WTC11 (cell line): ENCODE measurements at regions of chr6 and their contacts with region 1.

Region 1: DNA sequence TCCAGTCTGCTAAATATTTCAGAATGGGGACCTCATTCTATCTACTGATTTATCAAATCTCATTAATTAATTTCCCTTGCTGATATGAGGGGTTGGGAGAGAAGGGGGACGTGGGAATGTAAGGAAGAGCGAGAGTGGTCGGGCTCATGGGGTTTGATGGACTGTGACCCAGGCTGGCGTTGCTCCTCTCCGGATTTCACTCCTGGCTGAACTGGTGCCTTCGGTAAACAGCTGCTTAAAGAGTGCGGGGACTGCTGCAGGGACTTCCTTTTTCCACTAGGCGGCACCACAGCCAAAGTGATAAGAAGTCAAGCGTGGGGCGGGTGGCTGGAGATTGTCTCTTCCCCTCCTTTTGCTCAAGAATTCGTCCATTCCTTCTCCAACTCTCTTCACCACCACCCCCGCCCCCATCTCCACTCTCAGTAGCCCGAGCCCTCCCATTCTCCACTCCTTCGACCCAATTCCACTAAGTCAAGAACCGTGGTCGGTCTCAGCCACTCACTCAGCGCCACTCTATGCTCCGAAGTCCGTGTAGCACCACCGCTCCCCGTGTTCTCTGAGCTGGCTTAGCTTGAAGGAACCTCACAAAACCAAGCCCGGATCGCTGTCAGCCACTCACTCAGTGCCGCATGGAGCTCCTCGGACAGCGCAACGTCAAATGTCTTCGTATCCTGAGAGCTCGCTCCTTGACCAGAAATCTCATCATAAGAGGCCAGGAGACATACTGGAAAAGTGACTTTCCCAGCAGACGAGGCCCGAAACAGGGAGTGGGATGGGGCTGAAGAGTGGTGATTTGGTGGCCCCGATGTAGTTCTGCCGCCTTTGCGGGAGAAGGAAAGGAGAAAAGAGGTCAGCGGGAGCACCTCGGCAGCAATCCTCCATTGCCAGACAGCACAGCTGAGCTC is 9.7 kb downstream of the TRIM31 start:
- DNase-seq: peak; percentile 90
- ATAC-seq: peak; percentile 51
- H3K4me3 Mint-ChIP-seq: peak overlapping the region; percentile 80
- H3K27ac Mint-ChIP-seq: no peak overlapping the region
- H3K4me1 Mint-ChIP-seq: peaks cover 30% of the 10 kb centered on the region
- H3K27me3 Mint-ChIP-seq: peaks cover 83% of the 10 kb centered on the region
- CTCF ChIP-seq: peak; percentile 85

Region 2: GRCh38 chr6:29847871-29848630 is 255.2 kb before region 1 on chr6:
- CTCF ChIA-PET with region 1: interaction called, 10 read pairs
- POLR2A ChIA-PET with region 1: no interaction called
- DNase-seq: peak; percentile 91
- ATAC-seq: peak; percentile 85
- H3K4me3 Mint-ChIP-seq: no peak overlapping the region
- H3K27ac Mint-ChIP-seq: no peak overlapping the region
- H3K4me1 Mint-ChIP-seq: peaks cover 30% of the 10 kb centered on the region
- H3K27me3 Mint-ChIP-seq: peaks cover 56% of the 10 kb centered on the region
- CTCF ChIP-seq: peak; percentile 95

Region 3: DNA sequence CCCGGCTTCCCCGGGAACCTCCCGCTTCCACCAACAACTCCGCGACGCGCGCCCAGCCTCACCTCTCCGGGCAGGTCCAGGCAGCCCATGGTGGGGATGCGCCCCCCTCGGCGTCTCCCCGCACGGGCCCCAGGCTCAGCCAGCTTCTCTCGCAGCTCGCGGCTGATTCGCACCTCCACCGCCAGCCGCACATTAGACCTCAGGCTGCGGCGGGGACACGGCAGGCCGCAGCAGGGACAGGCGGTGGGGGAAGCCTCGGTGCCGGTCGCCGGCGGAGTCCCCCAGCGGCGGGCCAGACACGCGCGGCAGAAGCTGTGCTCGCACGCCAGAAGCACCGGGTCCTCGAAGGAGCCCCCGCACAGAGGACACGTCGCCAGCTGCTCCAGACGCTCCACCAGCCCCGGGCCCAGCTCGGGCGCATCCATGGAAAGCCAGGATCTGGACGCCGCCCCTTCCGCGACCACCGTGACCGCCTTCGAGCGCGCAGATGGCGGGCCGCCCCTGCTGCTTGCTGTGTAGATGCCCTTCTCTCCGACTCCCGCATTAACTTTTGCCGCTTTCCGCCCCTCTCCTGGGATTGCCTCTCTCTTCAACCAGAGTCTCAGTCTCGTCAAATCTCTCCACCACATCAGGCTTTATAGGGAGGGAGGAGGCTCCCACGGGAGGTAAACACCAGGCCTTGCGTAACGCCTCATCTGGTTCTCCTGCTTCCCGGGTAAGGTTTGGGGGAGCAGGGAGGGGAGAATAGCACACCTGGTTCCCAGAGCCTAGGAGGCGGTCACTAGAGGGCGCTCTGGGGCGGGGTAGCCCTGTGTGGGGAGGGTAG is 27.8 kb before region 1 on chr6 and contains the start of gene RNF39:
- CTCF ChIA-PET with region 1: interaction called, 69 read pairs
- POLR2A ChIA-PET with region 1: interaction called, 7 read pairs
- DNase-seq: peak; percentile 83
- ATAC-seq: peak; percentile 68
- H3K4me3 Mint-ChIP-seq: peak within 1 kb of the TSS; percentile 96
- H3K27ac Mint-ChIP-seq: peak within 1 kb of the TSS; percentile 47
- H3K4me1 Mint-ChIP-seq: peaks cover 32% of the 10 kb centered on the region
- H3K27me3 Mint-ChIP-seq: peaks cover 94% of the 10 kb centered on the region
- CTCF ChIP-seq: peak; percentile 73
- total RNA-seq, gene RNF39: 4.2 to 5.1 TPM (median 4.5 TPM) in 3 replicates

Region 4: DNA sequence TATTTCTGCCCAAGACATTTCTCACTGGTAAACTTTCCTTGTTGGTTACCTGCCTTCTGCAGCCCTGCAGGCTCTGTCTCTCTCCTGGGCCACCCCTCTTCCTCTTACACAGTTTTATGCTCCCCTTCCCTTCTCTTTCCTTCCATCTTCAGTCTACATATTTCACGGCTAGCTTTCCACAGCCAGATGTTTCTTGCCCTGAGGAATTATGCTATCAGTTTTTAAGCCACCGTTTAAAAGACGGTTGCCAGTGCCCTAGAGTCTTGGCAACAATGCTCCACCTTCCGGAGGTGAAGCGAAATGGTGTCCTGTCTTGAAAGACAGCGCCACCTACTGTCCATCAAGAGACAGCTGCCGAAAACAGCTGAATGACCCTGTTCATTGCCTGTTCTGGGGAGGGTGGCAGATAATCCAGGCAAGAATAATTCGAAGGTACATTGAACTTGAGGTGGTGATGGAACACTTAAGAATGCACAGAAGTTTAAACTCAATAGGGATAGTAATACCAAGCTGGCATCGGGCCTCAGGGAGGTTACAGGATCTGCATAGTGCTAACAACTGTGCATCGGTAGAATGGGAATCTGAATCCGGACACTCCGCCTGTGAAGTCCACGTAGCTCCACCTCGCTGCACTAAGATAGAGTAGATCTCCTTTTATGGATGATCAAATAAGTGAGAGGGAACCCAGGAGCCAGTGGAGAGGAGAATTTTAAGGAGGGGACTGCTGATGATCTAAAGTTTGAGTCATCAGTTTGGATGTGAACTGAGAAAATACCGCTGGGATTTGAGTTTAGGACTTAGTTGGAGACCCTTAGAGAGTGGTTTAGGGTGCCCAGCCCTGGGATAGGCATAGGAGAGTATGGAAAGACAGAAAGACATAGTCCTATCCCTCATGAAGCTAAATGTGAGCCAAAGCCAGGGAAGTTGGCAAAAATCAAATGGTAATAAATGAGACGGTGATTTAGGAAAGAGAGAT is 28.0 kb after region 1 on chr6:
- CTCF ChIA-PET with region 1: interaction called, 389 read pairs
- POLR2A ChIA-PET with region 1: interaction called, 3 read pairs
- DNase-seq: peak; percentile 58
- ATAC-seq: peak; percentile 62
- H3K4me3 Mint-ChIP-seq: peak overlapping the region; percentile 37; the same call in 1 of the 2 replicates
- H3K27ac Mint-ChIP-seq: no peak overlapping the region
- H3K4me1 Mint-ChIP-seq: peaks cover 17% of the 10 kb centered on the region
- H3K27me3 Mint-ChIP-seq: peaks cover 69% of the 10 kb centered on the region
- CTCF ChIP-seq: peak; percentile 94

Region 5: GRCh38 chr6:30169658-30170614 is 66.7 kb after region 1 on chr6:
- CTCF ChIA-PET with region 1: interaction called, 25 read pairs
- POLR2A ChIA-PET with region 1: no interaction called
- DNase-seq: no peak
- ATAC-seq: peak; percentile 79
- H3K4me3 Mint-ChIP-seq: no peak overlapping the region
- H3K27ac Mint-ChIP-seq: no peak overlapping the region
- H3K4me1 Mint-ChIP-seq: peaks cover 12% of the 10 kb centered on the region
- H3K27me3 Mint-ChIP-seq: peaks cover 78% of the 10 kb centered on the region
- CTCF ChIP-seq: peak; percentile 74

Region 6: GRCh38 chr6:30219244-30219643 is 116.0 kb after region 1 on chr6:
- CTCF ChIA-PET with region 1: interaction called, 22 read pairs
- POLR2A ChIA-PET with region 1: no interaction called
- DNase-seq: peak; percentile 44
- ATAC-seq: peak; percentile 81
- H3K4me3 Mint-ChIP-seq: no peak overlapping the region
- H3K27ac Mint-ChIP-seq: no peak overlapping the region
- H3K4me1 Mint-ChIP-seq: peaks cover 15% of the 10 kb centered on the region
- H3K27me3 Mint-ChIP-seq: peaks cover 32% of the 10 kb centered on the region
- CTCF ChIP-seq: peak; percentile 28; the same call in 1 of the 2 replicates

Region 7: DNA sequence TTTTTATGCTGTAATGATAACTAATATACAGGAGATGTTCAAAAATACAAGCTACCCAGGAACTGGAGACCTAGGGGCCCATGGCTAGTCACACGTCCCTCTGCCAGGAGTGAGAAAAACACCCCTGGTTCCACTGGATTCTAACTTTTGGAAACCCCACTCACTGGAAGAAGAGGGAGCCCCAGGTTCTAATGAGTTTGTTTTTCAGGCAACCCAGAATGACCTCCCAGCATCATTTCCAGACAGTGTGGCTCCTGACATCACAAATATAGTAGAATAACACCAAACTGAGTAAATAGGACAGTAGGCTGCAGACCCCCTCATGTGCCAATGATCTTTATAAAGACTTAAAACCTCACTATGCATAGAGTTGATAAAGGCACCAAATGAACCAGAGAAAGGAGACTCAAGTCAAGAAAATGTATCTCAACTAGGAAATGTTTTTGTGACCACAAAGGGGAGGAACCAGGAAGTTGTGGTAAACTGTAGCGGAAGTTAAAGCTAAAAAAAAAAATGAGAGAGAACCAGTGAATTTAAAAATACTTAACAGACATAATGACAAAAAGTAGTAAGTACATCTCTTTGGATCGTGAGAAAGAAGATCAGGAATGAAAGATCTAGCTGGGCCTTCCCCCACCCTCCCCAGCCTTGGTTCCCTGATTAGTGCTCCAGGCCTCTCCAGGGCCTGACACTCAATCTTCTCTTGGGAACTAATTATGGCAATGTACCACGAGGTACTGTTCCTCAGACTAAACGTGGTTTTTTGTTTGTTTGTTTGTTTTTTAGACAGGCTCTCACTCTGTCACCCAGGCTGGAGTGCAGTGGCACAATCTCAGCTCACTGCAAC is 405.9 kb after region 1 on chr6:
- CTCF ChIA-PET with region 1: no interaction called
- POLR2A ChIA-PET with region 1: no interaction called
- DNase-seq: no peak
- ATAC-seq: no peak
- H3K4me3 Mint-ChIP-seq: no peak overlapping the region
- H3K27ac Mint-ChIP-seq: no peak overlapping the region
- H3K4me1 Mint-ChIP-seq: peaks cover 19% of the 10 kb centered on the region
- H3K27me3 Mint-ChIP-seq: no peaks in the 10 kb centered on the region
- CTCF ChIP-seq: no peak

Region 8: DNA sequence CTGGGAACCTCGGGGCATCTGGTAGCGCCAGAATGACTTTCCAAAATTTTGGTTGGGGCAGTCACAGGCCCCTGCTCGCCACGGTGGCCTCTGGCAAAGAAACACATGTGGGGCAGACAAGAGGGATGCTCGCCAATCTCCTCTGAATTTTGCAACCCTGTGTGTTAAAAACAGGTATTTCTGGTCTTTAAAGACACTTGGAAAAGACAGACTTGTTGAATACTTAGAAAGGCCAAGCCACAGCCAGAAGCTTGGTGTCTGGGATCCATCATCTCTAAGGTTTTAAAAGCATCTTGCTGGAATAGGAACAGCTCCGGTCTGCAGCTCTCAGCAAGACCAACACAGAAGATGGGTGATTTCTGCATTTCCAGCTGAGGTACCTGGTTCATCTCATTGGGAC is 417.3 kb after region 1 on chr6:
- CTCF ChIA-PET with region 1: no interaction called
- POLR2A ChIA-PET with region 1: no interaction called
- DNase-seq: no peak
- ATAC-seq: no peak
- H3K4me3 Mint-ChIP-seq: no peak overlapping the region
- H3K27ac Mint-ChIP-seq: no peak overlapping the region
- H3K4me1 Mint-ChIP-seq: peaks cover 3% of the 10 kb centered on the region; the same call in 1 of the 2 replicates
- H3K27me3 Mint-ChIP-seq: peaks cover 45% of the 10 kb centered on the region
- CTCF ChIP-seq: no peak